Colonic mucosa (tissue), 4 donors: ENCODE measurements at regions of chr3 and their contacts with region 1.

Region 1: GRCh38 chr3:44913868-44914468 is 39.6 kb downstream of the TGM4 start:
- DNase-seq: peak; percentile 69
- H3K4me3 ChIP-seq: no peak overlapping the region
- H3K27ac ChIP-seq: no peak overlapping the region
- H3K4me1 ChIP-seq: no peaks in the 10 kb centered on the region
- H3K27me3 ChIP-seq: no peaks in the 10 kb centered on the region
- CTCF ChIP-seq: peak; percentile 76

Region 2: DNA sequence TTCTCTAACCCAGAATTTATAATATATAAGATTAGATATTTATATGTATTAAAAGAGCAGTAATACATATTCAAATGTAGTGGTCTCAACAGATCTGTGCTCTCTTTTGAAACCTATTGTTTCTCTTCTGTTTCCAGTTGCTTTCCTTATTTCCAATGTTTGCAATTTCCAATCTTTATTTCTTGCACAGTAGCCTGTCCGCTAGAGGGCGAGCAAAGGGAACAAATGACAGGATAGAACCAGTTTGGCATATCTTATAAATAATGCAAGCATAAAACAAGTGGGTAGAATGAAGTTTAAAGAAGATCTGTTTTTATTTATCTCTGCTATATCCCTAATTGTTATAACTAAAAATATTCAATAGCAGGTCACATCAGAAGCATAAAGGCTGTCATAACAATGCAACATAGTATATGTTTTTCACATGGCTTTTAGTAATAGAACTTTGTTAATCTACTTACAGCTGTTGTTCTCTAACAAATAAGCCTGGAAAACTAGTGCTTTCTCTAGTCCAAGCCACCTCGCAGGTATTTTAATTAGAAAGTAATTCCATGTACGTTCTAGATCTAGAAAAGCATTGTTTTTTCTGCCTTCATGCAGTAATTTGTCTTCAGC is 590.5 kb before region 1 on chr3:
- intact Hi-C with region 1: loop called (anchors 5 kb)
- DNase-seq: peak; percentile 73
- H3K4me3 ChIP-seq: no peak overlapping the region
- H3K27ac ChIP-seq: no peak overlapping the region
- H3K4me1 ChIP-seq: no peaks in the 10 kb centered on the region
- H3K27me3 ChIP-seq: no peaks in the 10 kb centered on the region
- CTCF ChIP-seq: peak; percentile 76

Region 3: GRCh38 chr3:44529927-44530326 is 384.0 kb before region 1 on chr3:
- intact Hi-C with region 1: loop called (anchors 5 kb)
- DNase-seq: peak; percentile 42
- H3K4me3 ChIP-seq: no peak overlapping the region
- H3K27ac ChIP-seq: no peak overlapping the region
- H3K4me1 ChIP-seq: no peaks in the 10 kb centered on the region
- H3K27me3 ChIP-seq: no peaks in the 10 kb centered on the region
- CTCF ChIP-seq: no peak